ENCODE measurements at regions of chr3 and their contacts with region 1.

Region 1: DNA sequence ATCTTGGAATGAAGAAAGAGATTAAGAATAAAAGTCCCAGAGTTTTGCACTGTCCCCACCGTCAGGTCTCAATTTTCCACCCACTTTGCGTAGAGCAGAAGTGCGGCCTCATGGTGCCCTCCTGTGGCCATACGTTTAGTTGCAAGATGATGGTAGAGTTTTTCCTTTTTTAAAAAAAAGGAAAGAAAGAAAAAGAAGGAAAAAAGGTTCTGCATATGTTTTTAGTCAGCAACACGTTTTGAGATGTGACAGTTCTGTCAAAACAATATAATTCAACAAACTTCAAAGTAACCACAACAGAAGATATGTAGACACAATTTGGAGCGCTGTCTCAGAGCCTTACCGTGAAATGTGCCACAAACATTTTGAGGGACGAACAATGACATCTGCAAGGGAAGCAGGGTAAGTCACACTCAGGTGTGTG is 24.6 kb downstream of the EBLN2 start:
- DNase-seq: peak; percentile 58
- ATAC-seq: peak; percentile 74

Region 2: DNA sequence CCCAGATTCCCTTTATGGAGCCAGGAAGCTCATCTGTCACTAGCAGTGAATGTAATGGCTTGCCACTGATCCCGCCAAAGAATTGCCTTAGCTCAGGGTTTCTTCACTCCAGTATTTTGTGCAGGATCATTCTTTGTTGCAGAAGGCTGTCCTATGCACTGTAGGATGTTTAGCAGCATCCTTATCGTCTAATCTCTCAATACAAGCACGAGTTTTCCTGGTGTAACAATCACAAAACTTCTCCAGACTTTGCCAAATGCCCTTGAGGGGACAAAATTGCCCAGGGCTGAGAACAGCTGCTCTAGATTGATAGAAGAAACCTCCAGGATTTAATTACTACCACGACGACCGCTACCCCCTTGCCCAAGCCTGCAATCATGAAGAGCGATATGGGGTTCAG is 231.1 kb before region 1 on chr3:
- intact Hi-C with region 1: loop called (anchors 10 kb)
- DNase-seq: no peak
- ATAC-seq: no peak

Region 3: DNA sequence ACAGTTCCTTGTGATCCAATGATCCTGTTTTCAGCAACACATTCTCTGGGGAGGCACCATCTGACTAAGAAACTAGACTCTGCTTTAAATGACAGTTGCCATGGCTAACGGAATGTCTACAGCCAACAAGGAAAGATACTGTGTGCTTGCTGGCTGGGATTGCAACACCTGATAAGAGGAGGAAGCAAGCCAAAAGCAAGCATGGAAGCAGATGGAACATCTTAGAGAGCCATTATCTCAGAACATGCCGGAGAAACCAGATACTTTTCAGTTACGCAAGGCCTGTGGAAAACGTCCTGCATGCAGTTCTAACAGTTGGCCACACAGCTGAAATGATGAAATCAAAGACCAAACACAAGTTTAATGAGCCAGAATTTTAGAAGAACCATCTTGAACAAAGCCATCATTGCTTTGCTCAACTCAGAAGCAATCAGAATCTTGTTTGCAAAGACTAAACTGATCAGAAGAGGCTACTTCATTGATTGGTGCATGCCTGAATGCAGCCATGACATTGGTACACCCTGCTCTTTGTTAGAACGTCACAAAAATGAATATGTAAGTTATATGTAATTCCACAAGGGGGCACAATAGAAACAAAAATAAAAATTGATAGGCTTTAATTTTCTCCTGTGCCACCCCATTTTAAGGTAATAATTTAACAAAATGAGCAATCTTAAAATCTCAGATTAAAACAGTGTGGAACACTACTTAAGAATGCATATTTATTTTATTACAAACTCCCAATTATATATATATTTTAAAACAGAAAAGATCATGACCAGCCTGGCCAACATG is 147.4 kb before region 1 on chr3:
- intact Hi-C with region 1: loop called (anchors 10 kb)
- DNase-seq: no peak
- ATAC-seq: peak; percentile 92

Region 4: DNA sequence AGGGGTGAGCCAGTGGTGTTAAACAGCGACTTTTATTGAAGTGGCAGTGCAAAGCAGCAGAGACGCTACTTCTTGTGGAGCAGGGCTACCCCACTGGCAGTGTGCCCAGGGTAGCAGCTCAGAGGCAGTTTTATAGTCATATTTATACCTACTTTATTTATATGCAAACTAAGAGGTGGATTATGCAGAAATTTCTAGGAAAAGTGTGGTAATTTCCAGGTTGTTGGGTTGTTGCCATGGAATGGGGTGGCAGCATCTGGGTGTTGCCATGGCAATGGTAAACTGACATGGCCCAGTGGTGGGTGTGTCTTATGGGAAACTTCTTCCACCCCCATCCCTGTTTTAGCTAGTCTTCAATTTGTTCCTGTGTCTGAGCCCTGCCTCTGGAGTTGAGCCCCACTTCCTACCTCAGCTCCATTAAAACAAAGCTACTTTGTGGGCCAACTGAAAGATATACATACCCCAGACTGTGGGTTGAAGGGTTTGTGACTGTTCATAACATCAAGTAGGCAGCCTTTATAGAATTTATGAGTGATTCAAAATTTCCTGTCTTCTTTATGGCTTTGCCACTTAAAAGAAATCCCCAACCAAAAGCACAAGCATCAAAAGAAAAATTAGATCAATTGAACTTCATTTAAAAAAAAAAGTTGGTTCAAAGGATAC is 35.7 kb after region 1 on chr3:
- intact Hi-C with region 1: no loop called
- DNase-seq: no peak
- ATAC-seq: no peak

Region 5: GRCh38 chr3:73134034-73134433 is 48.0 kb after region 1 on chr3:
- intact Hi-C with region 1: no loop called
- DNase-seq: no peak
- ATAC-seq: no peak

Measured in left ventricle myocardium superior (tissue), 1 donor.